GM18951 (cell line): ENCODE measurements at regions of chr15 and their contacts with region 1.

Region 1: GRCh38 chr15:69475769-69476358 is 23.2 kb downstream of the RPLP1 start:
- POLR2A ChIP-seq: no peak

Region 2: DNA sequence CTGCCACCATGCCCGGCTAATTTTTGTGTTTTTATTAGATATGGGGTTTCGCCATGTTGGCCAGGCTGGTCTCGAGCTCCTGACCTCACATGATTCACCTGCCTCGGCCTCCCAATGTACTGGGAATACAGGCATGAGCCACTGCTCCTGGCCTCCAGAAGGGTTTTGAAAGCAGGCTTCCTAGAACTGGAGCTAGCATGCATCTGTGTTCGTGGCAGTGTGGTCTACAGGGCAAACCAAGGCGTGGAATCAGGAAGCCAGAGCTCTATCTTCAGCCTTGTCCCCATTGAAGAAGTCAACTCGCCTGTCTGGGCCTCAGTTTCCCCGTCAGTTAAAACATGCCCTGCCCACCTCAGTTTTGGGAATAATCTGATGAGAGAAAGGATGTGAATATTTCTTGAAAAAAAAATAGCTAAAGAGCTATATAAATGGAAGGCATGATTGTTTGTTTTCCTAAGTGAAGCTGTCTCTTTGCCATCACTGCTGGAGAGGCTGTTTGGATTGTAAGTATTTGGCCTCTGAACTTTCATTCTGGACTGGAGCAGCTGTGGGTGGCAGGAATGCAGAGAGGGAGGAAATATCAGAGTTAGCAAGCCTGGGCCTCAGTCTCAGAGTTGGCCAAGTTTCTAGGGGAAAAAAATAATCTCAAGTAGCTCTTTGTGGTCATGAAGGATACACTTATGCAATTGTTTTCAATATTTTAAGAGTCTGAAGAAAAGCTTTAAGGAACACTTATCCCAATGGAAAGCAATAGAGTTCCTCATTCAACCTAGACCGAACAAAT is 1324.0 kb after region 1 on chr15:
- in situ Hi-C with region 1: loop called (anchors 25 kb)
- POLR2A ChIP-seq: no peak